Psoas muscle (tissue), 8 donors: ENCODE measurements at regions of chr13 and their contacts with region 1.

Region 1: GRCh38 chr13:99018418-99019180 is 40.7 kb upstream of the DOCK9 start:
- DNase-seq: no peak
- ATAC-seq: no peak
- H3K4me3 ChIP-seq: no peak overlapping the region
- H3K27ac ChIP-seq: no peak overlapping the region
- H3K4me1 ChIP-seq: no peaks in the 10 kb centered on the region
- H3K27me3 ChIP-seq: no peaks in the 10 kb centered on the region
- CTCF ChIP-seq: no peak

Region 2: GRCh38 chr13:97484301-97484700 is 1534.3 kb before region 1 on chr13:
- intact Hi-C with region 1: loop called in 1 of 2 experiments (anchors 10 kb)
- DNase-seq: no peak
- ATAC-seq: no peak
- H3K4me3 ChIP-seq: no peak overlapping the region
- H3K27ac ChIP-seq: no peak overlapping the region
- H3K4me1 ChIP-seq: peaks cover 4% of the 10 kb centered on the region
- H3K27me3 ChIP-seq: no peaks in the 10 kb centered on the region
- CTCF ChIP-seq: no peak

Region 3: GRCh38 chr13:98609756-98610155 is 408.8 kb before region 1 on chr13:
- intact Hi-C with region 1: no loop called
- DNase-seq: no peak
- ATAC-seq: no peak
- H3K4me3 ChIP-seq: no peak overlapping the region
- H3K27ac ChIP-seq: no peak overlapping the region
- H3K4me1 ChIP-seq: no peaks in the 10 kb centered on the region
- H3K27me3 ChIP-seq: no peaks in the 10 kb centered on the region
- CTCF ChIP-seq: no peak